Endothelial cell of umbilical vein (primary cell): ENCODE measurements at regions of chrX and their contacts with region 1.

Region 1: DNA sequence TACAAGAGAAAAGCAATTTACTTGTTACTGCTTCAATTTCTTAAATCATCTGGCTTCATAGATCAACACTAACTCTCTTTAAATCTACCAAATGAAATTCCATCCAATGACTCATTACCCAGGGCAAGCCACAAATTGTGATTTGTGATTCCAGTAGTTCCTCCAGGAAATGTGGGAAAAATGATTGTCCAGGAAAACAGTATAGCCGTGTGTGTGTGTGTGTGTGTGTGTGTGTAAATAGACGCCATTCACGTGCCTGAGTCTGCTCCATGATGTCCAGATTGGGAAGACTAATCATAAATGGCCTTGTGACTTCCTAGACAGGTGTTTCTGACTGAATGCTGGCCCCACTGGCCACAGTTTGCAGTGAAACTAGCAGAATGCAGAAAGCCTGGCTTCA is 121.3 kb downstream of the HS6ST2 start:
- DNase-seq: peak; percentile 92
- H3K4me3 ChIP-seq: no peak overlapping the region
- H3K27ac ChIP-seq: peak overlapping the region; percentile 55
- H3K4me1 ChIP-seq: peaks cover 22% of the 10 kb centered on the region
- H3K27me3 ChIP-seq: no peaks in the 10 kb centered on the region
- CTCF ChIP-seq: no peak
- POLR2A ChIP-seq: peak; percentile 32

Region 2: DNA sequence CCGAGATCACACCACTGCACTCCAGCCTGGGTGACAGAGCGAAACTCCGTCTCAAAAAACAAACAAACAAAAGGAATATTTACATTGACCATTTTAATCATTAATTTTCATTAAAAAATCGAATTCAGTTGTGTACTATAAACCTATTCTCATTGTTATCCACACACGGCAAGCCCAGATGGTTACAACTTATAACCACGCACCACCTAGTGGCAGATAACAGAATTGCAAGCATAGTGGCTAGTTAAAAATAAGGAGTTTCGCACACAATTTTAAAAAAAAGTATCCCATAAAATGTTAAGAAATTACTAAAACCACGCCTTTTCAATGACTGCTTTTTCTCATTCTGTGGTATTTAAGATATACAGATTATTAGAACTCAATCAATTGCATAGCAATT is 373.7 kb before region 1 on chrX:
- CTCF ChIA-PET with region 1: no interaction called
- POLR2A ChIA-PET with region 1: no interaction called
- dilution Hi-C with region 1: no loop called
- intact Hi-C with region 1: no loop called
- DNase-seq: no peak
- H3K4me3 ChIP-seq: no peak overlapping the region
- H3K27ac ChIP-seq: no peak overlapping the region
- H3K4me1 ChIP-seq: no peaks in the 10 kb centered on the region
- H3K27me3 ChIP-seq: no peaks in the 10 kb centered on the region
- CTCF ChIP-seq: peak; percentile 11 to 18
- POLR2A ChIP-seq: no peak

Region 3: GRCh38 chrX:132488819-132489577 is 348.1 kb before region 1 on chrX and contains the start of gene MBNL3:
- CTCF ChIA-PET with region 1: no interaction called
- POLR2A ChIA-PET with region 1: no interaction called
- dilution Hi-C with region 1: no loop called
- intact Hi-C with region 1: loop called (anchors 10 kb)
- DNase-seq: peak; percentile 43
- H3K4me3 ChIP-seq: peak within 1 kb of the TSS; percentile 53 to 81 (median 55)
- H3K27ac ChIP-seq: peak within 1 kb of the TSS; percentile 50
- H3K4me1 ChIP-seq: peaks cover 3% of the 10 kb centered on the region
- H3K27me3 ChIP-seq: peaks cover 0 to 7% of the 10 kb centered on the region in 2 experiments
- CTCF ChIP-seq: no peak
- POLR2A ChIP-seq: no peak
- total RNA-seq, gene MBNL3: 4.9 and 5.6 TPM in 2 replicates

Region 4: DNA sequence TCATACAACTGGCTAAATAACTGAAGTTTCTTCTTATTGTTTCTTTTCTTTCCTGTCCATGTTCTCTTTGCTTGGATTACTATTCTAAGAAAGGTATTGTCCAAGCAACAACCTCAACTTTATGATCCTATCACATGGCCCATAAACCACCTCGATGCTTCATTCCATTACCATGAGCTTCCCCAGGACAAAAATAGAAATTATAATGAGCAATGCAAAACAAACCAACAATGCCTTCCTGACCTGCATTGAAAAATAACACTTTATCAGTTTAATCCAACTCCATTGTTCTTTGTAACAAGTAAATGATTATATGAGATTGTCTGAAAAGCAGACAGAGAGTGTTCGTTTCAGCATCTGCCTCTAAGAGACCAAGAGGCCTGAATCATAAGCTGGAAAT is 27.5 kb before region 1 on chrX:
- CTCF ChIA-PET with region 1: no interaction called
- POLR2A ChIA-PET with region 1: no interaction called
- dilution Hi-C with region 1: no loop called
- intact Hi-C with region 1: loop called (anchors 1 kb)
- DNase-seq: peak; percentile 53
- H3K4me3 ChIP-seq: no peak overlapping the region
- H3K27ac ChIP-seq: peak overlapping the region; percentile 8
- H3K4me1 ChIP-seq: peaks cover 3% of the 10 kb centered on the region
- H3K27me3 ChIP-seq: no peaks in the 10 kb centered on the region
- CTCF ChIP-seq: no peak
- POLR2A ChIP-seq: no peak

Region 5: GRCh38 chrX:132858018-132858417 is 20.9 kb after region 1 on chrX:
- CTCF ChIA-PET with region 1: no interaction called
- POLR2A ChIA-PET with region 1: no interaction called
- dilution Hi-C with region 1: no loop called
- intact Hi-C with region 1: loop called (anchors 1 kb)
- DNase-seq: peak; percentile 78
- H3K4me3 ChIP-seq: no peak overlapping the region
- H3K27ac ChIP-seq: peak overlapping the region; percentile 69
- H3K4me1 ChIP-seq: peaks cover 27% of the 10 kb centered on the region
- H3K27me3 ChIP-seq: no peaks in the 10 kb centered on the region
- CTCF ChIP-seq: no peak
- POLR2A ChIP-seq: no peak

Region 6: GRCh38 chrX:133142349-133142748 is 305.2 kb after region 1 on chrX:
- CTCF ChIA-PET with region 1: no interaction called
- POLR2A ChIA-PET with region 1: no interaction called
- dilution Hi-C with region 1: no loop called
- intact Hi-C with region 1: no loop called
- DNase-seq: no peak
- H3K4me3 ChIP-seq: no peak overlapping the region
- H3K27ac ChIP-seq: no peak overlapping the region
- H3K4me1 ChIP-seq: no peaks in the 10 kb centered on the region
- H3K27me3 ChIP-seq: no peaks in the 10 kb centered on the region
- CTCF ChIP-seq: no peak
- POLR2A ChIP-seq: no peak